AG04450 (cell line): ENCODE measurements at regions of chr12 and their contacts with region 1.

Region 1: DNA sequence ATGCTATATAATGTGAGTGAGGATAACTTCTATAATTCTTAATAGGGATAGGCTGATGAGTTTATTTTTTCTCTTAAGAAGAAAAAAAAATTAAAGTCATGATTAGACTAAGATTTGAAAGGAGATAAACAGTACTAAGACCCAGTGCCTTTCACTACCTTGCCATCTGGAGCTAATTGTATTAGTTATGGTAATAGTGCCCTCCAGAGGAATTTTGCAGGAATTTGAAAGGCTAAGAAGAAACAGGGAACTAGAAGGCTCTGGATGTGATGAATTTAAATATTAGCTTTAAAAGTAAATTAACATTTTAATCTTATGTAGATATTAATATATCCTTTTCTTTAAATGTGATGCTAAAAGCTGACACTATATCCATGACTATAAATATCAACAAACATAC is 36.6 kb upstream of the PIK3C2G start:
- DNase-seq: no peak
- H3K4me3 ChIP-seq: no peak overlapping the region
- H3K27ac ChIP-seq: no peak overlapping the region
- H3K27me3 ChIP-seq: no peaks in the 10 kb centered on the region
- CTCF ChIP-seq: peak; percentile 52

Region 2: GRCh38 chr12:18101043-18101442 is 123.7 kb before region 1 on chr12:
- CTCF ChIA-PET with region 1: no interaction called
- POLR2A ChIA-PET with region 1: no interaction called
- DNase-seq: no peak
- H3K4me3 ChIP-seq: no peak overlapping the region
- H3K27ac ChIP-seq: no peak overlapping the region
- H3K27me3 ChIP-seq: no peaks in the 10 kb centered on the region
- CTCF ChIP-seq: no peak

Region 3: DNA sequence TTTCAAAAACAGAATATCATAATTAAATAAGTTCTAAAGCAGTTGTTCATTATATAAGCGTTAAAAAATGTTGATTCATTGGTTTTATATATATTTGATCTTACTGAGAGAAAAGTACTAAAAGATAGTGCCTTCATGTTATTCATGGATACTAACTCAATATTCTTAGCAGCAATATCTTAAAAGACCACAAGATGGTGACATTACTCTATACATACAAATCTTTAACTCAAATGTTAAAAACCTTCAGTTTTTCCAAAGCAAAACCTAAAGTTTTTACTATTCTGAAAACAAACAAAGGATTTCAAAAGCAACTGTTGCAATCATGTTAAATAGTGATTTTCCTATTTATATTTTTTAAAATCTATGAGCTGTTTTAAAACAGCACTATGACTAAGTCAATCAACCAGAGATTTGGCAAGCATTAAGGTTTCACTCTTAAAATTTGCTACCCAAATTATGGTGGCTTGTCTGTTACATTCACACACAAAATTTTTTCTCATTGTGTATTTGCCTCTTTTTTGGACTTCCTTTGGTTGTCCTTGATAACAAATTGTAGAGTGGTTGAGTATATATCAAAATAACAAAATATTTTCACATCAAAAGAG is 84.7 kb before region 1 on chr12:
- CTCF ChIA-PET with region 1: interaction called, 26 read pairs
- POLR2A ChIA-PET with region 1: no interaction called
- DNase-seq: no peak
- H3K4me3 ChIP-seq: no peak overlapping the region
- H3K27ac ChIP-seq: no peak overlapping the region
- H3K27me3 ChIP-seq: no peaks in the 10 kb centered on the region
- CTCF ChIP-seq: peak; percentile 56

Region 4: DNA sequence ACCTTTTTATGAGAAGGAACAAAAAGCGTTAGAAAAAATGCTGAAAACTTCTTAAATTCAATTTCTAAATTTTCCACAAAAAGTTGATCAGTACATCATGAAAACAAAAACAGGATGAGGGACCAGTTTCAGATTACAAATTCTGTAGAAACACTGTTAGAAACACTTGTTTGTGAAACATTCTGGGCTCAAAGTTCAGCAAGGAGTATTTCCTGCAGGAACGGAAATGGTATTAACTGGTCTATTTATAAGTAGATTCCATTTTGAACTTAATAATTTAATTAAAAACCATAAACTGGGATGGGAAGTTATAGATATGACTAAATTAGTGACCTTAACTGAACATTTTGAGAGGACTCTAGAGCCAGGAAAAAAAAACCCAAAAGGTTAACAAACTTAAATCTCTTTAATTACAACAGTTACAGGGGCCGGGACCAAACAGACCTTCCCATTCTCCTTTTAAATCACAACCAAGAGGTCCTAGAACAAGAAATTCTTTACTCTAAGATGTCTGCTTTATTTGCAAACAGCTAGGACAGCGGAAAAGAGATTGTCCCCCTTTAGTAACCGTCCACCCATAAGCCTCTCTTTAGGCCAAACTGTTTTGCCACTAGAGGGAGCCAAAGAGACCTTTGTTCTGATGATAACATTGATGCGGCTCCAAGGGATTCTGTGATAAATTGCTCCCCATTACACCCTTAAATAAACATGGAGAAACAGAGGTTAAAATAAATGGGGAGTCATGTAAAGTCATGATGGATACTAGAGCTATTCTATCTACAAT is 65.8 kb before region 1 on chr12:
- CTCF ChIA-PET with region 1: interaction called, 24 read pairs
- POLR2A ChIA-PET with region 1: no interaction called
- DNase-seq: no peak
- H3K4me3 ChIP-seq: no peak overlapping the region
- H3K27ac ChIP-seq: no peak overlapping the region
- H3K27me3 ChIP-seq: no peaks in the 10 kb centered on the region
- CTCF ChIP-seq: peak; percentile 89

Region 5: GRCh38 chr12:18521284-18521860 is 296.6 kb after region 1 on chr12:
- CTCF ChIA-PET with region 1: no interaction called
- POLR2A ChIA-PET with region 1: no interaction called
- DNase-seq: no peak
- H3K4me3 ChIP-seq: no peak overlapping the region
- H3K27ac ChIP-seq: no peak overlapping the region
- H3K27me3 ChIP-seq: no peaks in the 10 kb centered on the region
- CTCF ChIP-seq: no peak